ENCODE measurements at regions of chr22 and their contacts with region 1.

Region 1: DNA sequence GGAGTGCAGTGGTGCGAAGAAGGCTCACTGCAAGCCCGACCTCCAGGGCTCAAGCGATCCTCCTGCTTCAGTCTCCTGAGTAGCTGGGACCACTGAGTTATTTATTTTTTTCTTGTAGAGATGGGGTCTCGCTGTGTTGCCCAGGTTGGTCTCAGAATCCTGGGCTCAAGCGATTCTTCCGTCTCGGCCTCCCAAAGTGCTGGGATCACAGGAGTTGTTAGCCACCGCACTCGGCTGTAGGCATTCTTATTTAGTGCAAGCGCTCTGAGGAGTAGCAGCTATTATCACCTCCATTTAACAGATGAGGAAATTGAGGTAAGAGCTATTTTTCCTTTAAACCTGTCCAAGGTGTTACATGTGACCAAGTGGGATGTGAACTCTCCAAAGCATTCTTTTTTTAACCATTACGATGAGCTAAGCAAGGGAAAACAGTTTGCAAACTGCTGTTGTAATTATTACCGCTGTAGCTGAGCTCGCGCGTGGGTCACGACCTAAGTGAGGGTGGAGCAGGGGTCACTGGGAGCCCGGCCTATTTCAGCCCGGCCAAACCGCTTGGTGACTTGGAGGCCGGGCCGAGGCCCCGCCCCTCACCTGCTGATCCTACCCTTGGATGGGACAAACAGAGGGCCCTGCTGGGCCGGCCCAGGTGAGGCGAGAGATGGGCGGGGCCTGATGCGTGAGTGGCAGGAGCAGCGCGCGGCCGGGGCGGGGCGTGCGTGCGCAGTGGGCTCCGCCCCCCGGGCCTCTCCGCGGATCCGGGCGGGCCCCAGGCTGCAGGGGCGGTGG is 449 bp upstream of the KREMEN1 start:
- DNase-seq: peak; percentile 89
- H3K4me3 Mint-ChIP-seq: peak overlapping the region; percentile 52
- H3K27ac Mint-ChIP-seq: no peak overlapping the region
- H3K4me1 Mint-ChIP-seq: peaks cover 21% of the 10 kb centered on the region
- H3K27me3 Mint-ChIP-seq: peaks cover 42% of the 10 kb centered on the region

Region 2: DNA sequence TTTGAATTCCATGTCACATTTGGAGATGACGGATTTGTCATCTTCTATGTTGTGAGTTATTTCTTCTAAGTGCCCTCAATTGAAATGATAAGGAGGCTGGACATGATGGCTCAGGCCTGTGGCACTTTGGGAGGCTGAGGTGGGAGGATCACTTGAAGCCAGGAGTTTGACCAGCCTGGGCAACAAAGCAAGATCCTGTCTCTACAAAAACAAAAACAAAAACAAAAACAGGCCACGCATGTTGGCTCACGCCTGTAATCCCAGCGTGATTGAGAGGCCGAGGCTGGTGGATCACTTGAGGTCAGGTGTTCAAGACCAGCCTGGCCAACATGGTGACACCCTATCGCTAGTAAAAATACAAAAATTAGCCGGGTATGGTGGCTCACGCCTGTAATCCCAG is 200.0 kb before region 1 on chr22:
- CTCF ChIA-PET with region 1: no interaction called
- POLR2A ChIA-PET with region 1: no interaction called
- intact Hi-C with region 1: no loop called
- DNase-seq: no peak
- H3K4me3 Mint-ChIP-seq: no peak overlapping the region
- H3K27ac Mint-ChIP-seq: no peak overlapping the region
- H3K4me1 Mint-ChIP-seq: peaks cover 8% of the 10 kb centered on the region
- H3K27me3 Mint-ChIP-seq: no peaks in the 10 kb centered on the region

Region 3: DNA sequence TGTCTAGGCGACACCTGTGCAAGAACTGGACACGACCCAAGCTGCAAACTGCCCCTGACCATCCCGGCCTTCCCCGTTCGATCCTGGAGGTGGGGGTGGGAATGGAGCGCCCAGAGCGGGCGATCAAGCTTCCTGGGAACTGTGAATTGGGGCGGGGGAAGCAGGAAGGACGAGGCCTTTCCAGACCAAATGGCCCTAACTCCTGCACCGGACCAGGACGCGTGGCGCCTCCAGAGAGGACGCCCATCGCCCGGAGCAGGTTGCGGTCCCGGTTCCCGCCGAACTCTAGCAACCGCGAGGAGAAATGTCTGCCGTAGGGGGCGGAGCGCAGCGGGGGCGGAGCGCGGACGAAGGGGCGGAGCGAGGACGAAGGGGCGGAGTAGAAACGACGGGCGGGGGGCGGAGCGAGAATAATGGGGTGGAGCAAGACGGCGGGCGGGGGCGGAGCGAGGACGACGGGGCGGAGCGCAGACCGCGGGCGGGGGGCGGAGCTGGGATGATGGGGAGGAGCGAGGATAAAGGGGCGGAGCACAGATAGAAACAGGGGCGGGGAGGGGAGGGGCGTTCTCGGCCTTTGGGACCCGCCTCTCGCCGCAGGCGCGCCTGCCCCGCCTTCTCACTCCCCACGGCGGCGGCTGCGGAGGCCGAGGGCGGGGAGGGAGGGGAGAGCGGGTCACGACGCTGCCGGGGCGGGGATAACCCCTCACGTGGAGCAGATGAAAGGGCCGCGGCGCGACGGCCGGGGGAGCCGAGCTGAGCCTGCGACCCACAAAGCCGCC is 189.3 kb before region 1 on chr22 and contains the start of gene ZNRF3:
- CTCF ChIA-PET with region 1: no interaction called
- POLR2A ChIA-PET with region 1: no interaction called
- intact Hi-C with region 1: loop called (anchors 5 kb)
- DNase-seq: peak; percentile 93
- H3K4me3 Mint-ChIP-seq: peak within 1 kb of the TSS; percentile 78
- H3K27ac Mint-ChIP-seq: no peak within 1 kb of the TSS
- H3K4me1 Mint-ChIP-seq: peaks cover 15% of the 10 kb centered on the region
- H3K27me3 Mint-ChIP-seq: peaks cover 22% of the 10 kb centered on the region
- total RNA-seq, gene ZNRF3: 1.3 to 1.5 TPM

Region 4: GRCh38 chr22:29031227-29032011 is 41.0 kb before region 1 on chr22:
- CTCF ChIA-PET with region 1: no interaction called
- POLR2A ChIA-PET with region 1: no interaction called
- intact Hi-C with region 1: no loop called
- DNase-seq: no peak
- H3K4me3 Mint-ChIP-seq: no peak overlapping the region
- H3K27ac Mint-ChIP-seq: no peak overlapping the region
- H3K4me1 Mint-ChIP-seq: peaks cover 8% of the 10 kb centered on the region
- H3K27me3 Mint-ChIP-seq: peaks cover 33% of the 10 kb centered on the region

Measured in activated CD4-positive, alpha-beta memory T cell treated with anti-CD3 and anti-CD28 coated beads for 36 hours (primary cell).